ENCODE measurements at regions of chr1 and their contacts with region 1.

Region 1: DNA sequence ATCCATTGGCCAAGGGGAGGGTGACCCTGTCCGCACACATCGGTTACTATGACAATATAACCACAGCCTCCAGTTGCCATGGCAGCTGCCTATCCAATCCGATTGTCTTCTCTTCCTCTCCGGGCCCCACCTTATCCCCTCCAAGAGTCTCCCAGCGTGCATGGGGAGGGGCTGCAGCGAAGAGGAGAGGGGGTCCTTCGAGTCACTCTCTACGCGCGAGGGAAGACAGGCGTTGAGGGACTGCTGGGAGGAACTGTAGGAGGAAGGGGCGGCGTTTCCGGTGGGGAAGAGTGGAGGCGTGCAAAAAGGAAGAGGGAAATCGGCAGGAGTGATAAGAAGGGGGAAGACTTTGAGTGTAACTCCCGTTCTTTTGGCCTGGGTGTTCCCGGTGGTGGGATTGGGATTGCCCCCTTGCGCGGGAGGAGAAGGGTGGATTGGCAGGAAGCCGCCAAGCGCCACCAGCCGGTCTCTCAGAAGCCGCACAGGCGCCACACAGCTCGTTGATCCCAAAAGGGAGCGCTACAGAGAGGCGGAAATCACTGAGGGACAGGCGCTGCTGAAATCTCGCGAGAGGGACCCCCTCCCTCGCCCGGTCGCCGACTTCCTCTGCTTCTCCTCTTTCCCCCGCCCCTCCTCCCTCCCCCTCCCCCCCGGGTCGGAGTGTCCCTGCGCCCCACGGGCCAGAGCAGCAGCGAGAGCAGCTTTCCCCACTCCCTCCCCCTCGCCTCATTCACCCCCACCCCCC is 384 bp upstream of the SMG7 start:
- DNase-seq: peak; percentile 98 to 99 (median 98)
- ATAC-seq: peak; percentile 79
- H3K4me3 ChIP-seq: peak overlapping the region; percentile 84 to 94
- H3K27ac ChIP-seq: peak overlapping the region; percentile 97 to 99
- H3K4me1 ChIP-seq: peaks cover 6 to 42% of the 10 kb centered on the region in 2 donors
- H3K27me3 ChIP-seq: no peaks in the 10 kb centered on the region
- CTCF ChIP-seq: no peak

Region 2: DNA sequence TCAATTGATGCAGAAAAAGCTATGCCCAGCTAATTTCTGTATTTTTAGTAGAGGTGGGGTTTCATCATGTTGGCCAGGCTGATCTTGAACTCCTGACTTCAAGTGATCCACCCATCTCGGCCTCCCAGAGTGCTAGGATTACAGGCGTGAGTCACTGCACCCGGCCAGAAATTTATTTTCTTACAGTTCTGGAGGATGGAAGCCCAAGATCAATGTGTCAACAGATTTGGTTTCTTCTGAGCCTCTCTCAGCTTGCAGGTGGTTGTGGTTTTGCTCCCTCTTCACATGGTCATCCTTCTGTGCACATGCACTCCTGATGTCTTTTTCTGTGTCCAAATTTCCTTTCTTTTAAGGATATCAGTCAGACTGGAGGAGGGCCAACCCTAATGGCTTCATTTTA is 554.5 kb before region 1 on chr1:
- intact Hi-C with region 1: no loop called
- DNase-seq: no peak
- ATAC-seq: no peak
- H3K4me3 ChIP-seq: no peak overlapping the region
- H3K27ac ChIP-seq: no peak overlapping the region
- H3K4me1 ChIP-seq: no peaks in the 10 kb centered on the region
- H3K27me3 ChIP-seq: no peaks in the 10 kb centered on the region
- CTCF ChIP-seq: no peak

Region 3: GRCh38 chr1:183368202-183369108 is 103.5 kb before region 1 on chr1:
- intact Hi-C with region 1: no loop called
- DNase-seq: no peak
- ATAC-seq: no peak
- H3K4me3 ChIP-seq: no peak overlapping the region
- H3K27ac ChIP-seq: no peak overlapping the region
- H3K4me1 ChIP-seq: peaks cover 0 to 15% of the 10 kb centered on the region in 2 donors
- H3K27me3 ChIP-seq: peaks cover 0 to 7% of the 10 kb centered on the region in 2 donors
- CTCF ChIP-seq: no peak

Region 4: GRCh38 chr1:183543619-183544204 is 71.8 kb after region 1 on chr1:
- intact Hi-C with region 1: loop called in 1 of 2 experiments (anchors 10 kb)
- DNase-seq: peak in 2 of 4 donors; percentile 29 to 61
- ATAC-seq: peak; percentile 89
- H3K4me3 ChIP-seq: no peak overlapping the region
- H3K27ac ChIP-seq: no peak overlapping the region
- H3K4me1 ChIP-seq: peaks cover 3 to 7% of the 10 kb centered on the region in 2 donors
- H3K27me3 ChIP-seq: no peaks in the 10 kb centered on the region
- CTCF ChIP-seq: peak; percentile 38 to 48

Region 5: DNA sequence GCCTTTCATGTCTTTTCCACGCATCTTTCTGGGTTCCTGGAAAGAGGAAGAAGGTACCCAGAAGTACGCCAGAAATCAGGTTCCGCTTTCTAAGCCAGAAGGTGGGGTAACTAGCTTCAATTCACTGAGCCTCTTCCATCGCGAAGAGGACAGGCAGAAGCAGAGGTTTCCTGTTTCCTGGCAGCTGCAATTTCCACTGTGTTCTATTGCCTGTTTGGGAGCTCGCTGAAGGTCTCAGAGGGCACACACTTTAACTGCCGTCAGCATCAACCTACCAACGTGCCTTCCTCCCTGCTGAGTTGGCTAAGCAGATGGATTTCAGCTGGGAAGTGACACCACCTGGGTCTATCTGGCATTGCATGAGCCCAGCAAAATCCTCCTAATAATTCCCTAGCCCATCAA is 108.4 kb after region 1 on chr1:
- intact Hi-C with region 1: no loop called
- DNase-seq: peak in 1 of 4 donors; percentile 68
- ATAC-seq: peak; percentile 41
- H3K4me3 ChIP-seq: peak overlapping the region in 1 of 2 donors; percentile 6
- H3K27ac ChIP-seq: peak overlapping the region; percentile 51 to 87
- H3K4me1 ChIP-seq: peaks cover 0 to 84% of the 10 kb centered on the region in 2 donors
- H3K27me3 ChIP-seq: no peaks in the 10 kb centered on the region
- CTCF ChIP-seq: no peak

Region 6: GRCh38 chr1:183635606-183636333 is 163.9 kb after region 1 on chr1 and contains the start of gene ARPC5:
- intact Hi-C with region 1: loop called in 1 of 2 experiments (anchors 10 kb)
- DNase-seq: peak; percentile 96 to 100 (median 98)
- ATAC-seq: peak; percentile 93
- H3K4me3 ChIP-seq: peak within 1 kb of the TSS; percentile 69 to 90
- H3K27ac ChIP-seq: peak within 1 kb of the TSS; percentile 96 to 99
- H3K4me1 ChIP-seq: peaks cover 22 to 42% of the 10 kb centered on the region in 2 donors
- H3K27me3 ChIP-seq: no peaks in the 10 kb centered on the region
- CTCF ChIP-seq: no peak
- polyA plus RNA-seq, gene ARPC5: 130 to 167 (median 142) TPM

Measured in left lung (tissue), 14 donors.